ENCODE measurements at regions of chr6 and their contacts with region 1.

Region 1: DNA sequence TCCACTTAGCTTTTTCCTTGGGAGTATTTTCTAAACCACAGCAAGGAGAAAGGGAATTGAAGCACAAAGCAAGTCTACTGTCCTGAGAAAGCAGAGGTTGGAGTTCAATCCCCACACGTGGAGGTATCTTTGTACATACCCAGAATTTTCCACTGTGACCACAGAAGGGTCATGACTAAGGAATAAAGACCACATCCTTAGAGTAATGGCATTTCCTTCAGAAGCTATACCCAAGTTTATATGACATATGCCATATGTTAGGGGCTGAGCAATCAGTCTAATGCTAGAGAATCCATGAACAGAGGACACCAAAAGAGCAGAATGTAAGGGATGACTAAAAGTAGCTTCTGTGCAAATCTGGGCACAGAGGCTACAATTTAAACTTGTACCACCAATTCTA is 46.4 kb downstream of the ATG5 start:
- H3K4me3 ChIP-seq: no peak overlapping the region
- H3K27ac ChIP-seq: no peak overlapping the region
- H3K4me1 ChIP-seq: peaks cover 11% of the 10 kb centered on the region
- CTCF ChIP-seq: no peak

Region 2: DNA sequence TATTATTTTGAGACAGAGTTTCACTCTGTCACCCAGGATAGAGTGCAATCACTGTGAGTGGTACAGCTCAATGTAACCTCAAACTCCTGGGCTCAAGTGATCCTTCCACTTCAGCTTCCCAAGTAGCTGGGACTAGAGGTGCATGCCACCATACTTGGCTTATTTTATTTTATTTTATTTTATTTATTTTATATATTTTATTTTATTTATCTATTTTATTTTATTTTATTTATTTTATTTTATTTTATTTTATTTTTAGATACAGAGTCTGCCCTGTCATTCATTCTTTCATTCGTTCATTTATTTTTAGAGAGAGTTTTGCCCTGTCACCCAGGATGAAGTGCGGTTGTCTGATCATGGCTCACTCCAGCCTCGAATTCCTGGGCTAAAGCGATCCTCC is 10.9 kb after region 1 on chr6:
- CTCF ChIA-PET with region 1: no interaction called
- POLR2A ChIA-PET with region 1: no interaction called
- H3K4me3 ChIP-seq: no peak overlapping the region
- H3K27ac ChIP-seq: no peak overlapping the region
- H3K4me1 ChIP-seq: peaks cover 3% of the 10 kb centered on the region; the same call in 1 of the 2 replicates
- CTCF ChIP-seq: no peak

Region 3: DNA sequence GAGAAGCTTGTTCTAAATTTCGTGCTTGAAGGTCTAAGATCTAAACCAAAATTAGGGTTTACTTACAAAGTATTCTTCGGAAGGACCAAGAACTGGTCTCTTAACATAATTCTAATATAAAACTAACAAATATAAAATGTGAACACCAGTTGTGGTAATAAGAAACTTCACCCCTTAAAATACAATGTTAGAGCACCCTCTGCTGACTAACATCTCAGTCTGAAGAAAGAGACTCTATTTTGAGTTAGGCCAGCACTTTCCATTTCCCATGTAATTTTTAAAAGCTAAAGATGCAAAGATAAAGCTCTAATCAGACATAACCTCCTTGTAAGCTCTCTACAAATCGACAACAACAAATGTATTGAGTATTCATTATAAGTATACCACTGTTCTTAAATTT is 21.8 kb after region 1 on chr6:
- CTCF ChIA-PET with region 1: interaction called, 15 read pairs
- POLR2A ChIA-PET with region 1: no interaction called
- H3K4me3 ChIP-seq: no peak overlapping the region
- H3K27ac ChIP-seq: no peak overlapping the region
- H3K4me1 ChIP-seq: no peaks in the 10 kb centered on the region
- CTCF ChIP-seq: no peak

Region 4: GRCh38 chr6:106685833-106686232 is 406.7 kb after region 1 on chr6:
- CTCF ChIA-PET with region 1: no interaction called
- POLR2A ChIA-PET with region 1: no interaction called
- H3K4me3 ChIP-seq: no peak overlapping the region
- H3K27ac ChIP-seq: no peak overlapping the region
- H3K4me1 ChIP-seq: no peaks in the 10 kb centered on the region
- CTCF ChIP-seq: no peak